ENCODE measurements at regions of chr19 and their contacts with region 1.

Region 1: DNA sequence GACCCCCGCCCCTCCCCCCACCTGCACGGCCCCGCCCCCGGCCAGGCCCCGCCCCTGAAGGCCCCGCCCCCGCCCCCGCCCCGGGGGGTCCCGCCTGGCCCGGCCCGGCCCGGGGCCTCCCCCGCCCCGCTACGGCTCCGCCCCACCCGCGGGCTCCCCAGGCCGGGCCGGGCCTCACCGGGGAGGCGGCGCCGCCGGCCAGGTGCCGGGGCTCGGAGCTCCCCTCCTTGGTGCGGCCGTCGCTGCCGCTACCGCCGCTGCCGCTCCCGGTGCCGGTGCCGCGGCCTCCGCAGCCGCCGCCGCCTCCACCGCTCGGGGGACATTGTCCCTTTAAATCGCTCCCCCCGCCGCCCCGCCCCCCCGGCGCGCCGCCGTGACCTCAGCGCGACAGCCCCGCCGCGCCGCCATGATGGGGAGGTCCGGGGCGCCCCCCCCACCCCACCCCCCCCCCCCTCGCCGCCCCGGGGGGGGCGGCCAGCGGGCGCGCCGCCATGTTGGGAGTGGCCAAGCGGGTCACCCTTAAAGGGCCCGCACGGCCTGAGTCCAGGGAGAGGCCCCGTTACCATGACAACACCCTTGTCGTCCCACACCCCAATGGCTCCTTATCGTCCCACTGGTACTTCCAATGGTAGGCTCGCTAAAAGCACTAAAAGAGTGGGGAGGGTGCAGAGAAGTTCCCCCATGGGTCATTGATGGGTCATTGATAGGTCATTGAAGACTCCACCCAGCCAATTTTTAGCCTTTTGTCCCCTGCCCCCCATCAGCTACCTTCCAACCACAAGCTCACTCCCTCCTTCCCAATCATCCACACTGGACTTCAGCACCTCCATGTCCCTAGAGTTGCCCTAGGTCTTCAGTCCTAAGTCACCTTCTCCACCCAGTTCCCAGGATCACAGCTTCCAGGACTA is at the start of gene WIZ:
- DNase-seq: peak; percentile 97
- H3K4me3 ChIP-seq: peak within 1 kb of the TSS; percentile 72 to 93 (median 78)
- H3K27ac ChIP-seq: peak within 1 kb of the TSS; percentile 78 to 88 (median 88)
- H3K4me1 ChIP-seq: peaks cover 28 to 51% (median 39%) of the 10 kb centered on the region in 4 donors
- H3K27me3 ChIP-seq: peaks cover 0 to 11% (median 2%) of the 10 kb centered on the region in 4 donors
- CTCF ChIP-seq: no peak
- EP300 ChIP-seq: no peak
- POLR2A ChIP-seq: no peak
- total RNA-seq, gene WIZ: 36.1 to 74.3 (median 50.3) TPM

Region 2: DNA sequence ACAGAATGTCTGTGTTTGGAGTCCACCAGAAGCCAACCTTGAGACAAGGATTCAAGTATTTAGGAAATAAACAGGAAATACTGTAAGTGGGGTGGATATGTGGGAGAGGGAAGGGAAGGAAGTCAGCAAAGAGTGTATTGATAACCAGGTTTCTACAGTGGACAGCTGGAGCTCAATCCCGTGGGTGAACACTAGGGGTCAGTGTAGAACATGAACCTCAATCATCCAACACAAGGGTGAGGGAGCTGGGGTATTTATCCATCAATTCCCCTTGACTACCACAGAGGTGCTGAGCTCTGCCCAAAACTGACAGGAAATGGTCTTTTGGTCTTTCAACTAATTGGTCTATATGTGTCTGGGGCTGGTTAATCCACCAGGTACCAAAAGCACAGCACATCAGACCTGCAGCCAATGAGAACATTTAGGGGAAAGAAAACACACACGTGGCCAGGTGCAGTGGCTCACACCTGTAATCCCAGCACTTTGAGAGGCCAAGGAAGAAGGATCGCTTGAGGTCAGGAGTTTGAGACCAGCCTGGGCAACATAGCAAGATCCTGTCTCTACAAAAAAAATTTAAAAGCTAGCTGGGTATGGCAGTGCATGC is 348.3 kb before region 1 on chr19:
- intact Hi-C with region 1: loop called (anchors 10 kb)
- DNase-seq: no peak
- H3K4me3 ChIP-seq: no peak overlapping the region
- H3K27ac ChIP-seq: no peak overlapping the region
- H3K4me1 ChIP-seq: peaks cover 2 to 3% (median 2%) of the 10 kb centered on the region in 4 donors
- H3K27me3 ChIP-seq: no peaks in the 10 kb centered on the region
- CTCF ChIP-seq: peak; percentile 57 to 72 (median 59)
- EP300 ChIP-seq: no peak
- POLR2A ChIP-seq: no peak

Region 3: DNA sequence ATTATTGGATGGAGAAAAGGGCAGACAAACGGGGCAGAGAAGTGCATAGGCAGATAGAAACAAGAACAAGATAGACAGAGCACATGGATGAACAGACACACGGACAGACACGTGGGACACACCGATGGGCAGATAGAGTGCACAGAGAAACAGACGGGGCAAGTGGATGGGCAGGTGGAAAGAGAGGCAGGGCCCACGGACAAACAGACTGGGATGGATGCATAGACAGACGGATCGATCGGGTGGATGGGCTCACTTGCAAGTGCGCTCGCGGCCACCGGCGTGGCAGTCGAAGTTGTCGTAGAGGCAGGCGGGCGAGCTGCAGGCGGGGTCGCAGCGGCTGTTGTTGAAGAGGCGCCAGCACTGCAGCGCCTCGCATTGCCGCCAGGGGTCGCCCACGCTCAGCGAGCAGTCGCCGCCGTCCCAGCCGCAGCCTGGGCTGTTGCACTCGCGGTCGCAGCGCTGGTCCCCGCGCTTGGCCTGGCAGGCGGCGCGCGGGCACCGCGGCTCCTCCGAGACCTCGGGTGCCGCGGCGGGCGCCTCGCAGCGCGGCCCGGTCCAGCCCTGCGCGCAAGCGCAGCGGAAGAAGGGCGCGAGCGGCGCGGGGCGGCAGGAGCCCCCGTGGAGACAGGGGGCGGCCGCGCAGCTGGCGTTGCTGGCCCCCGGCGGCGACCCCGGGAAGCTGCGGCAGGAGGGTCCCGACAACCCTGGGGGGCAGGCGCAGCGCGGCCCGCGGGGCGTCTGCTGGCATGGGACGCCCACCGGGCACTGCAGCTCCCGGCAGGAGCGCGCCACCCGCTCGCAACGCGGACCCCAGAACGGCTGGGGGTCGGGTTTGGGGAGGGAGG is 272.4 kb before region 1 on chr19:
- intact Hi-C with region 1: loop called (anchors 10 kb)
- DNase-seq: no peak
- H3K4me3 ChIP-seq: peak overlapping the region; percentile 41 to 50 (median 43)
- H3K27ac ChIP-seq: no peak overlapping the region
- H3K4me1 ChIP-seq: peaks cover 5 to 12% (median 10%) of the 10 kb centered on the region in 4 donors
- H3K27me3 ChIP-seq: peaks cover 0 to 32% (median 4%) of the 10 kb centered on the region in 4 donors
- CTCF ChIP-seq: peak; percentile 96 to 98 (median 96)
- EP300 ChIP-seq: no peak
- POLR2A ChIP-seq: no peak

Region 4: GRCh38 chr19:15251749-15252397 is 198.0 kb before region 1 on chr19:
- intact Hi-C with region 1: loop called (anchors 5 kb)
- DNase-seq: peak; percentile 93
- H3K4me3 ChIP-seq: peak overlapping the region in 3 of 4 donors; percentile 22 to 41 (median 28)
- H3K27ac ChIP-seq: peak overlapping the region; percentile 77 to 90 (median 86)
- H3K4me1 ChIP-seq: peaks cover 74 to 77% (median 76%) of the 10 kb centered on the region in 4 donors
- H3K27me3 ChIP-seq: no peaks in the 10 kb centered on the region
- CTCF ChIP-seq: peak in 2 of 3 experiments; percentile 28 to 53
- EP300 ChIP-seq: no peak
- POLR2A ChIP-seq: no peak

Region 5: DNA sequence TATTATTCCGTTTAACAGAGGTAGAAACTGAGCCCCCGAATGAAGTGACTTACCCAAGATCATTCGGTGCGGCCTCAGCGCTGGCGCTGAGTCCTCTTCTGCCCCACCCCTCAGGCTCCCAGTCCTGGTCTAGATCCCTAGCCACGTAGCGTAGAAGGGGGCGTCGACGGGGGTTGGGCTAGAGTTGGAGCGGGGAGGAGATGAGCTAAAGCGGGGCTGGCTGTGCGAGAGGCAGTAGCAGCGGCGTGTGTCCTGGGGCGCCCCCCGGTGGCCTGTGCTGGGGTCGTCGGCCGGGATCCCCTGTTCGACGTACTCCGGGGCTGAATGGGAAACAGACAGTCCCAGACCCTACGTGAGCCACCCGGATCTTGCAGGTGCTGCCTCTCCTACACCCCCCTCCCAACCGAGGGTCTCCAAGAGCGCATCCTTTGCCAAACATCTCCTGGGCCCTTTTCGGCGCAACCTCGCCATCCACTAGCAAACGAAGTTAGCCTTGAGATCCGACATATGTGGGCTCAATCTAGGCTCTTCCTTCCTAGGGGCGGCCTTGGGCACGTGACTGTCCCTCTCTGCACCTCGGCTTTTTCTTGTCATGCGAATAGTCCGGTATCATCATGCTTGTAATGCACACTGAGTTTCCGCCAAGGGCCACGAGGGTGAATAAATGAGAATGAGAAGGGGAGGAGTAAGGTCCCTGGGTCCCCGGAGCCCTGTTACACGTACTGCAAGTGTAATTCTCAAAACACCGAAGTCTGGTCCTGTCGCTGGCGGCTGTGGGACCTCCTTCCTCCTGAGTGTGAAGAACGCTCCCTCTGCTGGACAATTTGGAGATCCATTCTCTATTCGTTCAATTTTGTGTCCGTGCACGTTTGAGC is 106.1 kb after region 1 on chr19:
- intact Hi-C with region 1: loop called (anchors 5 kb)
- DNase-seq: peak; percentile 97
- H3K4me3 ChIP-seq: peak overlapping the region; percentile 25 to 48 (median 38)
- H3K27ac ChIP-seq: no peak overlapping the region
- H3K4me1 ChIP-seq: peaks cover 10 to 25% (median 22%) of the 10 kb centered on the region in 4 donors
- H3K27me3 ChIP-seq: peaks cover 0 to 73% (median 6%) of the 10 kb centered on the region in 4 donors
- CTCF ChIP-seq: peak; percentile 73 to 80 (median 77)
- EP300 ChIP-seq: no peak
- POLR2A ChIP-seq: no peak